Ovary (tissue), 10 donors: ENCODE measurements at regions of chr11 and their contacts with region 1.

Region 1: GRCh38 chr11:66686801-66687750 is 9.4 kb upstream of the RBM4B start:
- DNase-seq: no peak
- H3K4me3 ChIP-seq: no peak overlapping the region
- H3K27ac ChIP-seq: no peak overlapping the region
- H3K4me1 ChIP-seq: no peaks in the 10 kb centered on the region
- H3K27me3 ChIP-seq: no peaks in the 10 kb centered on the region
- CTCF ChIP-seq: no peak
- EP300 ChIP-seq: no peak
- POLR2A ChIP-seq: no peak

Region 2: DNA sequence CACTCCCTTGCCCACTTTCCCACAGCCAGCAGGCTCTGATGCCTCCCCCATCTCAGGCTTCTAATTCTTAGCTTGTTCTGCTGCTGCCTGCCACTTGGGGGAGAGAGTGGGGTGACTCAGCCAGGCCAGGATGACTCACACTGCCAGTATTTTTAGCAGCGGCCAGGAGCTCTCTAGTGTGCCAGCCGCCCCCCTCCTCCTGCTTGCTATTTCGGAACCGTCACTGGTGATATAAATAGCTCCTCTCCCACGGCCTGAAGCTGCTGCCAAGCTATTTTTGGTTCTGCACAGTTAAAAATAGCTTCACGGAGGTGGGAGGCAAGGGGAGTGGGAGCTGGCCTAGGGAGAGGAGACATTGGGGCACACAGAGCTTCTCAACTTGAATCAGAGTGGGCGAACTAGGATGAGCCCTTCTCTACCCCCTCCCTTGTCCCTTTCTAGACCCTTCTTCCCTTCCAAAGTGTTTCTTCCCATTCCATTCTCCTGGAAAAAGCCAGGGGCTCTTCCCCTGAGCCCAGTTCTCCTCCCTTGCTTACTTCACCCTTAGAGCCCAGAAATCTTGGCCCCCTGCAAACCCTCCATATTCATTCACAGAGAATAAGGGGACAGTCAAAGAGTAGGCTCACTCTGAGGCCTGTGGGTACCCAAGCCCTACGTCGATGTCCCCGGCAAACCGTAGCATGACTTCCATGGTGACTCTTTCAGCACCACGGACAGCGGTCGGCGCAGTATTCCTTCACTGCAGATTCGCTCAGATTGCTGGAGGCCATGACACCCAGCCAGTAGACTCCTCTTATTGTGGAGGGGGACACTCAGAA is 268.7 kb before region 1 on chr11:
- intact Hi-C with region 1: loop called in 1 of 4 experiments (anchors 10 kb)
- DNase-seq: peak; percentile 50 to 78 (median 69)
- H3K4me3 ChIP-seq: no peak overlapping the region
- H3K27ac ChIP-seq: no peak overlapping the region
- H3K4me1 ChIP-seq: peaks cover 7% of the 10 kb centered on the region
- H3K27me3 ChIP-seq: no peaks in the 10 kb centered on the region
- CTCF ChIP-seq: no peak
- EP300 ChIP-seq: no peak
- POLR2A ChIP-seq: no peak

Region 3: GRCh38 chr11:66568124-66568916 is 118.8 kb before region 1 on chr11 and contains the start of gene CTSF:
- intact Hi-C with region 1: no loop called
- DNase-seq: peak; percentile 85 to 93 (median 89)
- H3K4me3 ChIP-seq: peak within 1 kb of the TSS; percentile 50
- H3K27ac ChIP-seq: peak within 1 kb of the TSS; percentile 35 to 47
- H3K4me1 ChIP-seq: peaks cover 7% of the 10 kb centered on the region
- H3K27me3 ChIP-seq: no peaks in the 10 kb centered on the region
- CTCF ChIP-seq: no peak
- EP300 ChIP-seq: no peak
- POLR2A ChIP-seq: peak; percentile 44
- total RNA-seq, gene CTSF: 52.6 to 188 (median 106) TPM

Region 4: GRCh38 chr11:66579017-66579606 is 108.0 kb before region 1 on chr11:
- intact Hi-C with region 1: loop called in 1 of 4 experiments (anchors 5 kb)
- DNase-seq: peak; percentile 77 to 89 (median 84)
- H3K4me3 ChIP-seq: no peak overlapping the region
- H3K27ac ChIP-seq: no peak overlapping the region
- H3K4me1 ChIP-seq: no peaks in the 10 kb centered on the region
- H3K27me3 ChIP-seq: no peaks in the 10 kb centered on the region
- CTCF ChIP-seq: peak; percentile 80 to 86 (median 82)
- EP300 ChIP-seq: no peak
- POLR2A ChIP-seq: no peak